ENCODE measurements at regions of chr13 and their contacts with region 1.

Region 1: DNA sequence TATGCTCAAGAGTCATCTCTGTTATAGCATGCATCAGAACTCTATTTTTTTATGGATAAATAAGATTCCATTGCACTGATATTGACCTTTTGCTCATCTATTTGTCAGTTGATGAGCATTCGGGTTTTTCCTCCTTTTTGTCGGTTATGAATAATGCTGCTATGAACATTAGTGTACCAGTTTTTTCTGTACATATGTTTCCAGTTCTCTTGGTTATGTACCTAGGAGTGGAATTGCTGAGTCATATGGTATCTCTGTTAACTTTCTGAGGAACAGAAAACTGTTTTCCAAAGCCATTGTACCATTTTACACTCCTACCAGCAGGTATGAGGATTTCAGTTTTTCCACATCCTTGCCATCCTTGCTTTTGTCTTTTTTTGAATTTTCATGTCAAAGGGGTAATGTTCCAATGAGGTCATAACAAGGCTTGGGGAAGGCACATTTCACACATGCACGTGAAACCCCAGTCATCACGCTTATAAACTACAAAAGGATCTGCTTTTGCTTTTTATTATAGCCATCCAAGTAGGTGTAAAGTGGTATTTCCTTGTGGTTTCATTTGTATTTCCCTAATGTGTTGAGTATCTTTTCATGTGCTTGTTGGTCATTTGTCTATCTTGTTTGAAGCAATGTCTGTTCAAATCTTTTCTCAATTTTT is 14.6 kb downstream of the KBTBD7 start:
- DNase-seq: peak; percentile 81
- H3K4me3 ChIP-seq: no peak overlapping the region
- H3K27ac ChIP-seq: peak overlapping the region; percentile 42
- H3K4me1 ChIP-seq: peaks cover 17% of the 10 kb centered on the region
- H3K27me3 ChIP-seq: no peaks in the 10 kb centered on the region

Region 2: DNA sequence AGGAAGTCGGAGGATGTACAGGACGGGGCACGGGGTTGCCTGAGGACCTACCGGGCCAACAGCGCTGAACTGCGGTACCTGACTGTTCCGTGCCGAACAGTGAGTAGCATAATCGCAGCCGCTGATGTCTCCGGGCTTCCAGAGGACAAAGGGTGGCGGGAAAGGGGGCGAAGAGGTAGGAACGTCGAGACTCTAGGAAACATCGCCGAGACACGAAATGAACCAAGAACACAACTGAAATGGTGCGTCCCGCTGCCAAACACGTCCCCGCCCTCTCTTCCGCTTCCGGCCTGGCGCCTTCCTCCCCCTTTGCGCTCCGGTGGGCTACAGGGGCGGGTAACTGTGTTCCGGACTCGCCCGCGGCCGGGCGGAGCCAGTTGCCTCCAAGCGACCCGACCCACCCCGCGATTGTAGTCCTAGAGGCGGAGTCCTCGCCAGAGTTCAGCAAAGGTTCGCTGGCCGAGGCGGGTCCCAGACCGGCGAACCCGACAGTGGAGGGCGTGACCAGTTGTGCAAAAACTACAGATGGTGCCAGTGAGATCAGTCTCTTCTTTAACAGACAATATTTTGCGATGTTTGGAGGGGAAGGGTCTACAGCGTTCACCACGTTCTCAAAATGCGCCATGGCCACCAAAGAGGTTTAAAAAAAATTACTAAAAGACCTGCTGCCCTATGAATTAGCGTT is 408.6 kb before region 1 on chr13 and contains the start of gene MRPS31:
- in situ Hi-C with region 1: no loop called
- DNase-seq: peak; percentile 98
- H3K4me3 ChIP-seq: peak within 1 kb of the TSS; percentile 96
- H3K27ac ChIP-seq: peak within 1 kb of the TSS; percentile 55
- H3K4me1 ChIP-seq: peaks cover 9% of the 10 kb centered on the region
- H3K27me3 ChIP-seq: no peaks in the 10 kb centered on the region
- total RNA-seq, gene MRPS31: 2.9 and 9.8 TPM in 2 replicates

Region 3: DNA sequence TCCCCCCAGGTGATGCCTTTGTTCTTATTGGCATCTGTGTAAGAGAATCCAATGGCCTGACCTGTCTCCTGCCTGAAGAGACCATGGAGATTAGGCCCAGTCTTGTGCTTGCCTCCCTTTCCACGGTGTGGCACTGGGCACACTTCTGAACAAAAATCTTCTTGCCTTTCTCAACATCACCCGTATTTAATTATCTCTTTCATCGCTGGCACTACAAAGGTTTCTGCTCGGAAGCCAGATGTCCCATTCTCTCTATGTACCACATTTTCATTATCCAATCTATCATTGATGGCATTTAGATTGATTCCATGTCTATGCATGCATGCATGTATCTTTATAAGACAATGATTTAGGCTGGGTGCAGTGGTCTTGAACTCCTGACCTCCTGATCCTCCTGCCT is 316.0 kb before region 1 on chr13:
- in situ Hi-C with region 1: no loop called
- DNase-seq: no peak
- H3K4me3 ChIP-seq: no peak overlapping the region
- H3K27ac ChIP-seq: no peak overlapping the region
- H3K4me1 ChIP-seq: no peaks in the 10 kb centered on the region
- H3K27me3 ChIP-seq: no peaks in the 10 kb centered on the region

Region 4: GRCh38 chr13:41122838-41123237 is 56.9 kb before region 1 on chr13:
- in situ Hi-C with region 1: loop called (anchors 10 kb)
- DNase-seq: no peak
- H3K4me3 ChIP-seq: no peak overlapping the region
- H3K27ac ChIP-seq: no peak overlapping the region
- H3K4me1 ChIP-seq: no peaks in the 10 kb centered on the region
- H3K27me3 ChIP-seq: no peaks in the 10 kb centered on the region

Region 5: GRCh38 chr13:41345914-41346589 is 166.3 kb after region 1 on chr13:
- in situ Hi-C with region 1: no loop called
- DNase-seq: no peak
- H3K4me3 ChIP-seq: no peak overlapping the region
- H3K27ac ChIP-seq: no peak overlapping the region
- H3K4me1 ChIP-seq: no peaks in the 10 kb centered on the region
- H3K27me3 ChIP-seq: no peaks in the 10 kb centered on the region

Measured in GM23248 (cell line).